PC-3 (cell line): ENCODE measurements at regions of chr1 and their contacts with region 1.

Region 1: DNA sequence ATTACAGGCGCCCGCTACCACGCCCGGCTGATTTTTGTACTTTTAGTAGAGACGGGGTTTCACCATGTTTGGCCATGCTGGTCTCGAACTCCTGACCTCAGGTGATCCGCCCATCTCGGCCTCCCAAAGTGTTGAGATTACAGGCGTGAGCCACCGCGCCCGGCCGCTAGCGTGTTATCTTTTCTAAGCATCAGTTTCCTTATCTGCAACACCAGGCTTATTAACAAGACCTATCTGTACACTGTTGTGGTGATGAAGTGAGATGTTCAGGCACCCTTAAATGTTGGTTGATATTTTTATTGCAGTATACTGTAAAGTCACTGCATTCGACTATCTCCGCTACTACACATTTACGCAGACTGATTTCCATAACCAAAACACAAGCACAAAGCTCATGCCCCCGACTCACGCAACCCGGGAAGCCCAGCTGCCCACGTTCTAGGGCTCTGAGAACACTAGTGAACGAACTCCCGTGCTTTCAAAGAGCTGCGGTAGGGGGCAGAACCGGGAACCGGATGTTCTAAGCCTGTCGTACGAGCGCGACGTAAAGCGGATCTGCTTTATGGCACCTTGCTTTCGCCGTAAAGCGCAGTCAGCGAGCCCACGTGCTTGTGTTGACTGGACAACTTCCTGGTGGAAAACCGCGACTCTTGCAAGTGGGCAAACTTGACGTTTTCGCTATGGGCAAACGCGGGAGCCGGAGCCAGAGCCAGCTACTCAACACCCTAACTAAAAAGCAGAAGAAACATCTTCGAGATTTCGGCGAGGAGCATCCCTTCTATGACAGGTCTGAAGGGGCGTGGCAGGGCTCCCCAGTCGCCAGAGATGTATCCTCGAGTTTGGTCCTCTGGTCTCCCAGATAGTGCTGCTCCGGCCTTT is at the start of gene UTP25:
- DNase-seq: peak; percentile 99
- ATAC-seq: peak; percentile 28
- H3K4me3 ChIP-seq: peak within 1 kb of the TSS; percentile 83
- H3K27ac ChIP-seq: peak within 1 kb of the TSS; percentile 95
- H3K4me1 ChIP-seq: peaks cover 80% of the 10 kb centered on the region
- H3K27me3 ChIP-seq: no peaks in the 10 kb centered on the region
- CTCF ChIP-seq: peak; percentile 81
- total RNA-seq, gene UTP25: 14.3 and 15.3 TPM in 2 replicates

Region 2: GRCh38 chr1:209202830-209203439 is 624.7 kb before region 1 on chr1:
- CTCF ChIA-PET with region 1: no interaction called
- POLR2A ChIA-PET with region 1: no interaction called
- intact Hi-C with region 1: no loop called
- DNase-seq: peak; percentile 84
- ATAC-seq: peak; percentile 61
- H3K4me3 ChIP-seq: no peak overlapping the region
- H3K27ac ChIP-seq: no peak overlapping the region
- H3K4me1 ChIP-seq: peaks cover 12% of the 10 kb centered on the region
- H3K27me3 ChIP-seq: no peaks in the 10 kb centered on the region
- CTCF ChIP-seq: peak; percentile 92

Region 3: DNA sequence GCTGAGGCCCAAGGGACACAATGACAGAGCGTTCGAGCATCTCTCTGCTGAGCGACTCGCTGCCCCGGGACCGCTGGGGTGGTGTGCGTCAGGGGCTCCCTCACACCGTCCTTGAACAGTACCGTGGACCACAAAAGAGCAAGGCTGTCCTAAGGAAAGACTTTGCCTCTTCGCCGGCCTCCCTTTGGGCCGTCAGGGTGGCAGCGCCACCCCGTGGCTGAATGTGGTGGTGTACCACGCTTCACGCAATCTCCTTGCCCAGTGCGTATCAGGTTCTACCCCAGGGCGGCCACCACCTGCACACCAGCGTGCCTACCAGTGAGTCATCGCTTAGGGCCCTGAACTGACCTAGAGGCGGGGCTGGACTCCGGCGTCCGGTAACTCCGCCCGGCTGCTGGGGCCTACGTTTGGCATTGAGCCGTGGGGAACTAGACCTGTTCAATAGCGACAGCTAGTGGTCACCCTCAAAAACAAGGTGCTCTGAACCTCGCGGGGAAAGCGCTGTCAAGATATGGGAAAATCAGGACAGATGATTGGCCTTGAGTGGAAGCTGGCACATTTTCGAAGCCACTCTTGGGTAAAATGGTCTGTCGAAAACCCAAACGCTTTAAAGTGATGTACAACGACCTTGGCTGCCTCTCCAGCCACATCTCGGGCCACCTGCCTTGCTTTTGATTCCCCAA is 79.9 kb before region 1 on chr1:
- CTCF ChIA-PET with region 1: interaction called, 3 read pairs
- POLR2A ChIA-PET with region 1: no interaction called
- intact Hi-C with region 1: loop called (anchors 1 kb)
- DNase-seq: peak; percentile 99
- ATAC-seq: peak; percentile 99
- H3K4me3 ChIP-seq: no peak overlapping the region
- H3K27ac ChIP-seq: 0 out of 2 replicates have a peak overlapping the region, but pooled peaks have one; percentile 6
- H3K4me1 ChIP-seq: peaks cover 24% of the 10 kb centered on the region
- H3K27me3 ChIP-seq: no peaks in the 10 kb centered on the region
- CTCF ChIP-seq: peak; percentile 97

Region 4: DNA sequence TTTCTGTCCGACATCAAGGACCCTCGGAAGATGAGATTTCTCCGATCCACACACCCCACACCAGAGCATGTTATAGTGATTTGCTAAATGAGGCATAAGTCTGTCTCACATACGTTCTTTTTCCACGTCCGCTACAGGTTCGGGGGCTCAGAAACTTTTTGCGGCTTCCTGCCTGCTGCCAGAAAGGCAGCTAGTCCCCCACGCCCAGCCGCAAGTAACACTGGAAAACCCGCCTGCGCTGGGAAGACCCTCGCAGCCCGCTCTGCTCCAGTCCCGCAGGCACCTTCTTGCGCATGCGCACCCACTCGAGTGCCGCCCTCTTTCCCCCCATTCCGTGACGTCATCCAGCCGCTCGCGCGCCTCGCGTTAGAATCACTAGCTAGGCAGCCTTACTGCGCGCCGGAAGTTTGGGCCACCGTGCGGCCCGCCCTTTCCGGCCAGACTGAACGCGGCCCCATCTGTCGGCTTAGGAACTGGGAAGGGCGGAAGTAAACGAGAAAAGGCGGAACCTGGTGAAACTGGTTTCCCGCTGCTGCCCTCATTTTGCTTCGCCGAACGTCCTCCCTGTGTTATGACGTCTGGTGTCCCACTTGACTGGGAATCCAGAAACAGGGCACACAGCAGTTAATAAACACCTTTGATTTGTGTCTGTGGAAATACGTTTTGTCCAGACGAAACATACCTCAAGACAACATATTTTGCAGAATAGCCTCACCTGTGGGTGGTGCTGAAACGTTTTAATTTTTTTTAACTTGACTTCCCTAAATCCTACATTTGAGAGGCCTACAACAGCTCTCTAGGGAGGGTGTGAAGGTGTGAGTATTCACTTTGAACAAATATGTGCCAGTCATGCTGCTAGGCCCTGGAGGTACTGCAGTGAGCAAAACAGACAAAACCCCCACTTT is 43.1 kb before region 1 on chr1 and contains the start of gene C1orf74:
- CTCF ChIA-PET with region 1: interaction called, 3 read pairs
- POLR2A ChIA-PET with region 1: interaction called, 5 read pairs
- intact Hi-C with region 1: loop called (anchors 2 kb)
- DNase-seq: peak; percentile 99
- ATAC-seq: peak; percentile 100
- H3K4me3 ChIP-seq: peak within 1 kb of the TSS; percentile 70
- H3K27ac ChIP-seq: peak within 1 kb of the TSS; percentile 65
- H3K4me1 ChIP-seq: peaks cover 18% of the 10 kb centered on the region
- H3K27me3 ChIP-seq: no peaks in the 10 kb centered on the region
- CTCF ChIP-seq: 0 out of 2 replicates have a peak, but pooled peaks have one; percentile 24
- total RNA-seq, gene C1orf74: 5.7 and 6.7 TPM in 2 replicates

Region 5: DNA sequence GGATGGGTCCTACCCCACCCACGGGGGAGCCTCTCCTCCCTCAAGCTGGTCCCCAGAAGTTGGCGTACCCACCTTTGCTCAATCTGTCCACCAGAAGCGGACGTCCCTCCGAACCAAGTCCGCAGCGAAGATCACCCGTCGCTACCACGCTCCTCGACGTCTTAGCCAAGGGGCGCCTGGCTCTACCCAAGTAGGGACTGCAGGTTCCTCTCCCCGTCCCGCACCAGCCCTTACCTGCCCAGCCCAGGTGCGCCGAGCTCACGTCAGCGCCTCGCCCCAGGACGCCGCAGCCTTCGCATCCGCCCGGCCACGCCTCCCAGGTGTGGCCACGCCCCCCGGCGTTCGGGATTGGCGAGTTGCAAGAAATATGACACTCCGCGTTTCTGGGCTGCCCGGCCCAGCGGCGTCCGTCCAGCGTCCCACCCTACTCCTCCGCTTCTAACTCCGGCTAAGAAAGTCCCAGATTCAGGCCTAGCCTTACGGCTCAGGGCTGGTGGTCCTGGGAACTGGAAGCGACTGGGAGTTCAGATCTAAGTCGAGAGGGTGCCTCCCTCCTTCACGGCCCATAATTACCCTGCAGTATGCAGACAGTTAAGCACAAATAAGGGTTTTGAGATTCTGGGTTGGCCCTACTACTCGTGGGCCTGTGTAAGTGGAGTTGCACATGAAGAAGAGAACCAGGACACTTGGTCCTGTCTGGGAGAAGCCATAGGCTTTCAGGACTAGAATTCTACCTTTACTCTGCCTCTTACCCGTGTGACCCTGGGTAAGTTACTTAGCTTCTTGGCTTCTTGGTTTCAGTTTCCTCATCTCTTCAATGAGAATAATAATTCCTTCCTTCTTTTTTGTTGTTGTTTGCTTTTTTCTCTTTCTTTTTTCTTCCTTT is 21.5 kb before region 1 on chr1 and contains the start of gene IRF6:
- CTCF ChIA-PET with region 1: interaction called, 10 read pairs
- POLR2A ChIA-PET with region 1: interaction called, 3 read pairs
- intact Hi-C with region 1: loop called (anchors 1 kb)
- DNase-seq: peak; percentile 99
- ATAC-seq: peak; percentile 84
- H3K4me3 ChIP-seq: peak within 1 kb of the TSS; percentile 81
- H3K27ac ChIP-seq: peak within 1 kb of the TSS; percentile 84
- H3K4me1 ChIP-seq: peaks cover 58% of the 10 kb centered on the region
- H3K27me3 ChIP-seq: no peaks in the 10 kb centered on the region
- CTCF ChIP-seq: no peak
- total RNA-seq, gene IRF6: 61.6 and 65.7 TPM in 2 replicates

Region 6: DNA sequence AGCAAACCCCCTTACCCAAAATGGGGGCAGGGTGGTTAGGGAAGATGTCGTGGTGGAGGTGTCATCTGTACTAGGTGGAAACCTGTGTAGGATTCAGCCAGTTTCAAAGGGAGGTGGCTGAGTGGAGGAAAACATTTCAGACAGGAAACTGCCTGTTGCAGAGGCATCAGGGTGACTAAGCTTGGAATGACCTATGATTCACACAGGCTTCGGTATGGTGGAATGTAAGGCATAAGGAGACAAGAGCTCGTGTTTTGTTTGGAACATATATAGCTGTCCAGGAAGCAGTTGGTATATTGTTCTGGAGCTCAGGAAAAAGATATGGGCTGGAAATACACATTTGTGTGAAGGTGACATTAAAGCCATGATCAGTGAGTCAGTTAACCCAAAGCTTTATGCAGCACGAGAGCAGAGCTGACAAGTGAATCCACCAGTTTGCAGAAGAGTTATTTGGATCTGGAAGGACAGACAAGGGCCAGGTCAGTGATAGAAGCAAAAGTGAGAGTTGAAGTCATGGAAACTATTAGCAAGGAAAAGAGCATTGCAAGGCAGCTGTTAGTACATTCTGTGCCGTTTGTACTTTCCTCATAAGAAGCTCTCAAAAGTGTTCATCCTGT is 12.4 kb after region 1 on chr1:
- CTCF ChIA-PET with region 1: interaction called, 6 read pairs
- POLR2A ChIA-PET with region 1: interaction called, 15 read pairs
- intact Hi-C with region 1: no loop called
- DNase-seq: peak; percentile 96
- ATAC-seq: peak; percentile 99
- H3K4me3 ChIP-seq: peak overlapping the region; percentile 17; the same call in 1 of the 2 replicates
- H3K27ac ChIP-seq: peak overlapping the region; percentile 79
- H3K4me1 ChIP-seq: peaks cover 26% of the 10 kb centered on the region
- H3K27me3 ChIP-seq: no peaks in the 10 kb centered on the region
- CTCF ChIP-seq: no peak

Region 7: DNA sequence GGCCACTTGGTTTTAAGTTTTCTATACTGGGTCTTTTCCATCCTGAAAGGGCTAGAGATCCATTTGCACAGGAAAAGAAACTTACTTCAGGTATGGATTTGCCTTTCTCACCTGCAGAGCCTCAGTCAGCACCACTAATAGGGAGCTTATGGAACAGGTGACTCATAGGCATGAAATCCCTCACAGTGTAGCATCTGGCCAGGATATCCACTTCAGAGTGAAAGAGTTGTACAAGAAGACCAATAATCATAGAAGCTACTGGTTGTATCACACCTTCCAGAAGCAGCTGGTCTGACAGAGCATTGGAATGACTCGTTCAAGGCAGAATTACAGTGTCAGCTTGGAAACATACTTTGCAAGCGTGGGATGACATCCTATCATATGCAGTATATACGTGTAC is 84.1 kb after region 1 on chr1:
- CTCF ChIA-PET with region 1: no interaction called
- POLR2A ChIA-PET with region 1: no interaction called
- intact Hi-C with region 1: no loop called
- DNase-seq: no peak
- ATAC-seq: no peak
- H3K4me3 ChIP-seq: no peak overlapping the region
- H3K27ac ChIP-seq: no peak overlapping the region
- H3K4me1 ChIP-seq: no peaks in the 10 kb centered on the region
- H3K27me3 ChIP-seq: no peaks in the 10 kb centered on the region
- CTCF ChIP-seq: no peak

Region 8: DNA sequence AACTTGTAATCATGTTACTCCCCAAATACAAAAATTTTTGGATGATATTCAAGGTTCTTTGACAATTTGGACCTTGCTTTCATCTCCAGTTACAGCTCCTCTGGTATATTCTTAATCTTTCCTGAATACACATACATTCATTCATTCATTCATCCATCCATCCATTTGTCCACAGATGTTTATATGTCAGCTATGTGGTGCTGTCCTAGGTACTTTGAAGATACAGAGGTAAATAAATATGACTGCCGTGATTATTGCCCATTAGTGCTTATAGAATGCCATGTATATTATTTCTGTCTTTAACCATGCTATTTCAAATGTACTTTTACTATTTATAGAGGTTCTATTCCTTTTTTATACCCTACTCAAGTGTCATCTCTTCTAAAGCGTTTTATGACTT is 182.5 kb after region 1 on chr1:
- CTCF ChIA-PET with region 1: no interaction called
- POLR2A ChIA-PET with region 1: interaction called, 21 read pairs
- intact Hi-C with region 1: no loop called
- DNase-seq: no peak
- ATAC-seq: no peak
- H3K4me3 ChIP-seq: no peak overlapping the region
- H3K27ac ChIP-seq: no peak overlapping the region
- H3K4me1 ChIP-seq: no peaks in the 10 kb centered on the region
- H3K27me3 ChIP-seq: no peaks in the 10 kb centered on the region; the same call in 1 of the 2 replicates
- CTCF ChIP-seq: no peak